T-cell (primary cell): ENCODE measurements at regions of chr6 and their contacts with region 1.

Region 1: DNA sequence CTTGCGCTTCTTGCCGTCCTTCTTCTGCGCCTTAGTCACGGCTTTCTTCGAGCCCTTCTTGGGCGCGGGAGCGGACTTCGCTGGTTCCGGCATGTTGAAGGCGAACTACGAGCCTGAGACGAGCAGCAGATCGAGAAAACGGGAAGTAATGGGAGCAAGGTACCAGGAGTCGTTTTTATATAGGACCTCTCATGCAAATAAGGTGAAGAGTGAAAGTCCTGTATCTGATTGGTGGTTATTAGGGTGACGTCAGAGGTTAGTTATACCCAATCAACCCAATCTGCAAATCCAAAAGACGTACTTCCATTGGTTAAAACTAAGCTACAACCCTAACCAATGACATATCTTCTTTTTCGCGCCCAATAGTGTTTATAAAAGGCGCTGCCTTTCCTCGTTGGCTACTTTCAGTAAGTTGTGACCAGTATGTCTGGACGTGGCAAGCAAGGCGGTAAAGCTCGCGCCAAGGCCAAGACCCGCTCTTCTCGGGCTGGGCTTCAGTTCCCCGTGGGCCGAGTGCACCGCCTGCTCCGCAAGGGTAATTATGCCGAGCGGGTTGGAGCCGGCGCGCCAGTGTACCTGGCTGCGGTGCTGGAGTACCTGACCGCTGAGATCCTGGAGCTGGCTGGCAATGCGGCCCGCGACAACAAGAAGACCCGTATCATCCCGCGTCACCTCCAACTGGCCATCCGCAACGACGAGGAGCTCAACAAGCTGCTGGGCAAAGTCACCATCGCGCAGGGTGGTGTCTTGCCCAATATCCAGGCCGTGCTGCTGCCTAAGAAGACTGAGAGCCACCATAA is 100.6 kb upstream of the PRSS16 start:
- DNase-seq: peak; percentile 43 to 96 (median 69)
- ATAC-seq: peak; percentile 85 to 88 (median 86)
- H3K4me3 ChIP-seq: peak overlapping the region; percentile 77 to 93
- H3K4me3 Mint-ChIP-seq: no peak overlapping the region
- H3K27ac ChIP-seq: peak overlapping the region; percentile 91
- H3K27ac Mint-ChIP-seq: no peak overlapping the region
- H3K4me1 ChIP-seq: peaks cover 11 to 29% of the 10 kb centered on the region in 2 experiments
- H3K4me1 Mint-ChIP-seq: peaks cover 13 to 20% (median 18%) of the 10 kb centered on the region in 3 donors
- H3K27me3 ChIP-seq: no peaks in the 10 kb centered on the region
- H3K27me3 Mint-ChIP-seq: no peaks in the 10 kb centered on the region

Region 2: GRCh38 chr6:26025894-26026832 is 1120.7 kb before region 1 on chr6:
- CTCF ChIA-PET with region 1: no interaction called
- POLR2A ChIA-PET with region 1: interaction called in 1 of 2 experiments, 18 read pairs
- DNase-seq: peak; percentile 70 to 98 (median 96)
- ATAC-seq: peak; percentile 33 to 46 (median 36)
- H3K4me3 ChIP-seq: peak overlapping the region; percentile 63 to 88
- H3K4me3 Mint-ChIP-seq: peak overlapping the region; percentile 82 to 93 (median 92)
- H3K27ac ChIP-seq: peak overlapping the region; percentile 93
- H3K27ac Mint-ChIP-seq: peak overlapping the region; percentile 93 to 99
- H3K4me1 ChIP-seq: peaks cover 22 to 24% of the 10 kb centered on the region in 2 experiments
- H3K4me1 Mint-ChIP-seq: peaks cover 43 to 53% (median 44%) of the 10 kb centered on the region in 3 donors
- H3K27me3 ChIP-seq: no peaks in the 10 kb centered on the region
- H3K27me3 Mint-ChIP-seq: peaks cover 0 to 2% of the 10 kb centered on the region in 2 donors

Region 3: GRCh38 chr6:26270903-26271667 is 875.8 kb before region 1 on chr6:
- CTCF ChIA-PET with region 1: no interaction called
- POLR2A ChIA-PET with region 1: interaction called in 1 of 2 experiments, 12 read pairs
- DNase-seq: peak; percentile 49 to 90 (median 74)
- ATAC-seq: peak; percentile 20 to 35 (median 32)
- H3K4me3 ChIP-seq: peak overlapping the region; percentile 71 to 83
- H3K4me3 Mint-ChIP-seq: no peak overlapping the region
- H3K27ac ChIP-seq: peak overlapping the region; percentile 89
- H3K27ac Mint-ChIP-seq: peak overlapping the region in 1 of 2 donors; percentile 58
- H3K4me1 ChIP-seq: peaks cover 18 to 31% of the 10 kb centered on the region in 2 experiments
- H3K4me1 Mint-ChIP-seq: peaks cover 20 to 29% (median 21%) of the 10 kb centered on the region in 3 donors
- H3K27me3 ChIP-seq: no peaks in the 10 kb centered on the region
- H3K27me3 Mint-ChIP-seq: no peaks in the 10 kb centered on the region

Region 4: GRCh38 chr6:27078734-27079357 is 68.1 kb before region 1 on chr6:
- CTCF ChIA-PET with region 1: no interaction called
- POLR2A ChIA-PET with region 1: no interaction called
- DNase-seq: peak in 21 of 35 experiments; percentile 3 to 67 (median 17)
- ATAC-seq: peak; percentile 58 to 87 (median 76)
- H3K4me3 ChIP-seq: peak overlapping the region; percentile 35 to 59
- H3K4me3 Mint-ChIP-seq: peak overlapping the region; percentile 30 to 75 (median 69)
- H3K27ac ChIP-seq: no peak overlapping the region
- H3K27ac Mint-ChIP-seq: no peak overlapping the region
- H3K4me1 ChIP-seq: peaks cover 6 to 7% of the 10 kb centered on the region in 2 experiments
- H3K4me1 Mint-ChIP-seq: peaks cover 3 to 8% (median 6%) of the 10 kb centered on the region in 3 donors
- H3K27me3 ChIP-seq: peaks cover 7% of the 10 kb centered on the region in 2 experiments
- H3K27me3 Mint-ChIP-seq: peaks cover 49 to 54% of the 10 kb centered on the region in 2 donors

Region 5: GRCh38 chr6:27126815-27127537 is 19.9 kb before region 1 on chr6:
- CTCF ChIA-PET with region 1: interaction called, 3 to 52 read pairs
- POLR2A ChIA-PET with region 1: interaction called, 88 to 201 read pairs
- DNase-seq: peak; percentile 54 to 94 (median 74)
- ATAC-seq: peak; percentile 70 to 87 (median 84)
- H3K4me3 ChIP-seq: peak overlapping the region; percentile 11 to 27
- H3K4me3 Mint-ChIP-seq: peak overlapping the region; percentile 68 to 76 (median 69)
- H3K27ac ChIP-seq: peak overlapping the region; percentile 57
- H3K27ac Mint-ChIP-seq: peak overlapping the region; percentile 82 to 86
- H3K4me1 ChIP-seq: peaks cover 10 to 17% of the 10 kb centered on the region in 2 experiments
- H3K4me1 Mint-ChIP-seq: peaks cover 10 to 20% (median 16%) of the 10 kb centered on the region in 3 donors
- H3K27me3 ChIP-seq: no peaks in the 10 kb centered on the region
- H3K27me3 Mint-ChIP-seq: no peaks in the 10 kb centered on the region

Region 6: DNA sequence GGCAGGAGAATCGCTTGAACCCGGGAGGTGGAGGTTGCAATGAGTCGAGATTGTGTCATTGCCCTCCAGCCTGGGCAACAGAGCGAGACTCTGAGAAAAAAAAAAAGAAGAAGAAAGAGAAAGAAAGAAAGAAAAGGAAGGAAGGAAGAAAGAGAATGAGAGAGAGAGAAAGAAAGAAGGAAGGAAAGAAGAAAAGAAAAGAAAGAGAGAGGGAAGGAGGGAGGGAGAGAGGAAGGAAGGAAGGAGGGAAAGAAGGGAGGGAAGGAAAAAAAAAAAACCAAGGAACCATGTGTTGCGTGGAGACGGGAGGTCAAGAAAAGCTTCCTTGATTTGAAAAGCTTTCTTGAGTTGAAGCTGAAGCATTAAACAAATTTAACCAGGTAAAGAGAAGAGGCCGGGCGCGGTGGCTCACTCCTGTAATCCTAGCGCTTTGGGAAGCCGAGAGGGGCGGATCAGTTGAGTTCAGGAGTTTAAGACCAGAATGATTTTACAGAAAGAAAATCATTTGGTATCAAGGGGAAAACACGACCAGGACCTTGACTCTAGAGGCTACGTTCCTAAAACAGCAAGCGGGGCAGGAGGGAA is 10.1 kb after region 1 on chr6:
- CTCF ChIA-PET with region 1: interaction called in 1 of 2 experiments, 5 read pairs
- POLR2A ChIA-PET with region 1: interaction called, 4 to 13 read pairs
- DNase-seq: no peak
- ATAC-seq: peak in 1 of 4 experiments; percentile 7
- H3K4me3 ChIP-seq: peak overlapping the region; percentile 52 to 67
- H3K4me3 Mint-ChIP-seq: peak overlapping the region; percentile 81 to 87 (median 86)
- H3K27ac ChIP-seq: peak overlapping the region; percentile 35
- H3K27ac Mint-ChIP-seq: peak overlapping the region; percentile 77 to 91
- H3K4me1 ChIP-seq: peaks cover 15 to 20% of the 10 kb centered on the region in 2 experiments
- H3K4me1 Mint-ChIP-seq: peaks cover 40 to 44% (median 42%) of the 10 kb centered on the region in 3 donors
- H3K27me3 ChIP-seq: no peaks in the 10 kb centered on the region
- H3K27me3 Mint-ChIP-seq: no peaks in the 10 kb centered on the region

Region 7: DNA sequence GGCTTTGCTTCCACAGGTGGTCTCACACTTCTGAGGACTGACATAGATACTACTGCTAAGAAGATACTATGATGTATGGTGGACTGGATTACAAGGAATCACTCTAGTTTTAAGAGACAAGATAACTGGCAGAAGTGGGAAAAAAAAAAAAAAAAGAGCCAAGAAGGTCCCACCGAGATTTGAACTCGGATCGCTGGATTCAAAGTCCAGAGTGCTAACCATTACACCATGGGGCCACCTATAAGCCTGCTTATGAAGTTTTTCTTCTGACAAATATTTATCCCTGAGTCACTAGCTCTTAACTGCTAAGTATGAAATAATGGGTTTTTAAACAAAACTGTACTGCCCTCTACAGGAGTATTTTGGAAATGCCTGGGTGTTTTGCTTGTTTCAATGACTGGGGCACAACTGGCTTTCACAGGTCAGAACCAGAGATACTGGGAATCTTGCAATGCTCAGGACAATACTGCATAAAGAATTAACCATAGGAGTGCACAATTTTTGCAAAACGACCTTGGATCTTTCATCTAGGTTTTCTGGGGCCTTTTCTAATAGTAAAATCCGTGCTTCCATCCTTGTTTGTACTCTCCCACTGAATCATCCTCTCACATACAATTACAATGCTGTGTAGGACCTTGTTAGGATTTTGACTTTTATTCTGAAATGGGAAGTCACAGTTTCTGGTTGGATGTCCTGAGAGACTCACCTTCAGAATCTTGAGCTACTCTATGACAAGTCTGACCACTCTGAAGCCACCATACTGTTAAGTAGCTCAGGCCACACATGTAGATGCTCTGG is 649.0 kb after region 1 on chr6:
- CTCF ChIA-PET with region 1: interaction called in 1 of 2 experiments, 3 read pairs
- POLR2A ChIA-PET with region 1: interaction called in 1 of 2 experiments, 14 read pairs
- DNase-seq: peak in 19 of 35 experiments; percentile 5 to 88 (median 41)
- ATAC-seq: peak; percentile 48 to 66 (median 57)
- H3K4me3 ChIP-seq: no peak overlapping the region
- H3K4me3 Mint-ChIP-seq: no peak overlapping the region
- H3K27ac ChIP-seq: no peak overlapping the region
- H3K27ac Mint-ChIP-seq: peak overlapping the region; percentile 17 to 22
- H3K4me1 ChIP-seq: peaks cover 11 to 20% of the 10 kb centered on the region in 2 experiments
- H3K4me1 Mint-ChIP-seq: peaks cover 23 to 26% (median 23%) of the 10 kb centered on the region in 3 donors
- H3K27me3 ChIP-seq: peaks cover 0 to 9% of the 10 kb centered on the region in 2 experiments
- H3K27me3 Mint-ChIP-seq: peaks cover 5 to 9% of the 10 kb centered on the region in 2 donors

Region 8: DNA sequence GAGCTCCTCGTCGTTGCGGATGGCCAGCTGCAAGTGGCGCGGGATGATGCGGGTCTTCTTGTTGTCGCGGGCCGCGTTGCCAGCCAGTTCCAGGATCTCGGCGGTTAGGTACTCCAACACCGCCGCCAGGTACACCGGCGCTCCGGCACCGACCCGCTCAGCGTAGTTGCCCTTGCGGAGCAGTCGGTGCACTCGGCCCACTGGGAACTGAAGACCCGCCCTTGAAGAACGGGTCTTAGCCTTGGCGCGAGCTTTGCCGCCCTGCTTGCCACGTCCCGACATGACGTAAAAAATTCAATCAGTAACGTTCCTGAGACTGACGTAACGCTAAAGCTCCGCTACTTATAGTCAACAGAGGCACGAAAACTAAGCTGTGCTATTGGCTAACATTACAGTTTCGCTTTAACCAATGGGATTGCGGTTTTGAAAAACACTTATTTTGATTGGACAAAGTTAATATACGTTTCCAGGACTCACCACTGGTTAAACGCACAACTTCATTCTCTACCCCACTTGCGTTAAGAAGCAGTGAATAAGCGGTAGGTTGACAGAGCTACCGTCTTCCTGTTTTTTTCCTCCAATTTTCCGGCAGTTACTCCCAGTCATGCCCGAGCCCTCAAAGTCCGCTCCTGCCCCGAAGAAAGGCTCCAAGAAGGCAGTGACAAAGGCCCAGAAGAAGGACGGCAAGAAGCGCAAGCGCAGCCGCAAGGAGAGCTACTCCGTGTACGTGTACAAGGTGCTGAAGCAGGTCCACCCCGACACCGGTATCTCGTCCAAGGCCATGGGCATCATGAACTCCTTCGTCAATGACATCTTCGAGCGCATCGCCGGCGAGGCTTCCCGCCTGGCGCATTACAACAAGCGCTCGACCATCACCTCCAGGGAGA is 691.4 kb after region 1 on chr6:
- CTCF ChIA-PET with region 1: interaction called in 1 of 2 experiments, 3 read pairs
- POLR2A ChIA-PET with region 1: interaction called in 1 of 2 experiments, 57 read pairs
- DNase-seq: peak; percentile 62 to 97 (median 79)
- ATAC-seq: peak; percentile 80 to 83 (median 82)
- H3K4me3 ChIP-seq: peak overlapping the region; percentile 86 to 87
- H3K4me3 Mint-ChIP-seq: no peak overlapping the region
- H3K27ac ChIP-seq: peak overlapping the region; percentile 99
- H3K27ac Mint-ChIP-seq: no peak overlapping the region
- H3K4me1 ChIP-seq: peaks cover 14 to 28% of the 10 kb centered on the region in 2 experiments
- H3K4me1 Mint-ChIP-seq: peaks cover 9 to 20% (median 9%) of the 10 kb centered on the region in 3 donors
- H3K27me3 ChIP-seq: peaks cover 0 to 8% of the 10 kb centered on the region in 2 experiments
- H3K27me3 Mint-ChIP-seq: peaks cover 4 to 7% of the 10 kb centered on the region in 2 donors